ENCODE measurements at regions of chr19 and their contacts with region 1.

Region 1: GRCh38 chr19:57613941-57614743 is at the start of gene ZNF134:
- DNase-seq: peak; percentile 87
- ATAC-seq: peak; percentile 99
- H3K4me3 ChIP-seq: peak within 1 kb of the TSS; percentile 92 to 97 (median 97)
- H3K27ac ChIP-seq: peak within 1 kb of the TSS; percentile 59
- H3K4me1 ChIP-seq: peaks cover 42% of the 10 kb centered on the region
- H3K27me3 ChIP-seq: no peaks in the 10 kb centered on the region; a peak in 1 of 5 replicates
- CTCF ChIP-seq: peak; percentile 43
- EP300 ChIP-seq: no peak
- POLR2A ChIP-seq: peak; percentile 69 to 73
- RAD21 ChIP-seq: no peak; the same call in 1 of the 2 replicates
- total RNA-seq, gene ZNF134: 17.1 and 19.4 TPM in 2 replicates

Region 2: GRCh38 chr19:57599761-57600383 is 14.3 kb before region 1 on chr19 and contains the start of gene ZNF530:
- CTCF ChIA-PET with region 1: no interaction called
- POLR2A ChIA-PET with region 1: no interaction called
- in situ Hi-C with region 1: no loop called
- intact Hi-C with region 1: no loop called
- DNase-seq: peak; percentile 91
- ATAC-seq: peak; percentile 99
- H3K4me3 ChIP-seq: peak within 1 kb of the TSS; percentile 73 to 89 (median 80)
- H3K27ac ChIP-seq: peak within 1 kb of the TSS; percentile 14
- H3K4me1 ChIP-seq: peaks cover 19% of the 10 kb centered on the region
- H3K27me3 ChIP-seq: no peaks in the 10 kb centered on the region
- CTCF ChIP-seq: peak; percentile 34
- EP300 ChIP-seq: 0 out of 4 replicates have a peak, but pooled peaks of 1 of the 2 experiments have one; percentile 12
- POLR2A ChIP-seq: peak in 1 of 2 experiments; percentile 44; a peak in 1 of 4 replicates
- RAD21 ChIP-seq: no peak
- total RNA-seq, gene ZNF530: 7.5 and 7.8 TPM in 2 replicates

Region 3: DNA sequence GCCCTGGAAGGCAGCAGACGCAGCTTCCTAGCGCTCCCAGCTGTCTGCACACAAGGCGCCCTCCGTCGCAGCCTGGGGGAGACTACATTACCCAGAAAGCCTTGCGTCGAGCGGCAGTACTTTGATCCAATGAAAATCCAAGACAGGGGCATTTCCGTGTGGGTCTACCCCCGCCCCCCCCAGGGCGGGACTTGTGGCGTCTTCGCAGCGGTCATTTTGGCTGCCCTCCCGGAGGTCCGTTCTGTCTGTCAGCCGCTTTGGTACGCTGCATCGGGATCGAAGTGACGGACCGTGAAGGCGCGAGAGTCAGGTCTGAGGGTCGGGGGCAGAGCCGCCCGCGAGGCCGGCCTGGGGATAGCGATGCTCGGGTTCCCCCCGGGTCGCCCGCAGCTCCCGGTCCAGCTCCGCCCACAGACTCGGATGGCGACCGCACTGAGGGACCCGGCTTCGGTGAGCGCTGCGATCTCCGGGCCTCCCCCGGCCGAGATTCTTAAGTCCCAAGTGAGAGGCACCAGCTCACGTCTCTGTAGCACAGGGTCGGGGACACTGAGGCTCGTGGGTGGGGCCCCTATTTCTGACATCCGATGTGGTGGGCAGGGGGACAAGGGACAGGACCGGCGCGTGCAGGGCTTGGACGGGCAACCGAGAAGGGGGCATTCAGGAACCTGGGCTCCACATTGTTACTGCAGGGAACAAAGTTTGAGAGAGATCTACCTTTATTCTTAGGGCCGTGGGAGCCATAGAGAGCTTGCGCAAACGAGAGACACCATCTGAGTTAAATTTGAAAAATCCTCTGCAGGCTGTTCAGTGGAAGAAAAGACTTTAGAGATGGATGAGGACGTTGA is 19.1 kb after region 1 on chr19 and contains the start of gene ZNF211:
- CTCF ChIA-PET with region 1: no interaction called
- POLR2A ChIA-PET with region 1: interaction called, 14 read pairs
- in situ Hi-C with region 1: no loop called
- intact Hi-C with region 1: no loop called
- DNase-seq: peak; percentile 92
- ATAC-seq: peak; percentile 98
- H3K4me3 ChIP-seq: peak within 1 kb of the TSS; percentile 87 to 96 (median 89)
- H3K27ac ChIP-seq: peak within 1 kb of the TSS; percentile 34
- H3K4me1 ChIP-seq: peaks cover 12% of the 10 kb centered on the region
- H3K27me3 ChIP-seq: no peaks in the 10 kb centered on the region; a peak in 1 of 5 replicates
- CTCF ChIP-seq: peak; percentile 40; the same call in 1 of the 2 replicates
- EP300 ChIP-seq: no peak
- POLR2A ChIP-seq: peak; percentile 31 to 74; a peak in 2 of 4 replicates
- RAD21 ChIP-seq: no peak
- total RNA-seq, gene ZNF211: 11.2 and 12.2 TPM in 2 replicates